Dendritic cell treated with granulocyte-macrophage colony-stimulating factor and Interleukin-4, amounts not matched to agents 40 ng/mL and 50 ng/mL, for 4 days (primary cell): ENCODE measurements at regions of chr14 and their contacts with region 1.

Region 1: GRCh38 chr14:35331605-35332516 is 39.7 kb downstream of the PSMA6 start:
- H3K4me3 Mint-ChIP-seq: peak overlapping the region; percentile 11
- H3K27ac Mint-ChIP-seq: peak overlapping the region; percentile 95
- H3K4me1 Mint-ChIP-seq: peaks cover 49% of the 10 kb centered on the region
- H3K27me3 Mint-ChIP-seq: no peaks in the 10 kb centered on the region

Region 2: DNA sequence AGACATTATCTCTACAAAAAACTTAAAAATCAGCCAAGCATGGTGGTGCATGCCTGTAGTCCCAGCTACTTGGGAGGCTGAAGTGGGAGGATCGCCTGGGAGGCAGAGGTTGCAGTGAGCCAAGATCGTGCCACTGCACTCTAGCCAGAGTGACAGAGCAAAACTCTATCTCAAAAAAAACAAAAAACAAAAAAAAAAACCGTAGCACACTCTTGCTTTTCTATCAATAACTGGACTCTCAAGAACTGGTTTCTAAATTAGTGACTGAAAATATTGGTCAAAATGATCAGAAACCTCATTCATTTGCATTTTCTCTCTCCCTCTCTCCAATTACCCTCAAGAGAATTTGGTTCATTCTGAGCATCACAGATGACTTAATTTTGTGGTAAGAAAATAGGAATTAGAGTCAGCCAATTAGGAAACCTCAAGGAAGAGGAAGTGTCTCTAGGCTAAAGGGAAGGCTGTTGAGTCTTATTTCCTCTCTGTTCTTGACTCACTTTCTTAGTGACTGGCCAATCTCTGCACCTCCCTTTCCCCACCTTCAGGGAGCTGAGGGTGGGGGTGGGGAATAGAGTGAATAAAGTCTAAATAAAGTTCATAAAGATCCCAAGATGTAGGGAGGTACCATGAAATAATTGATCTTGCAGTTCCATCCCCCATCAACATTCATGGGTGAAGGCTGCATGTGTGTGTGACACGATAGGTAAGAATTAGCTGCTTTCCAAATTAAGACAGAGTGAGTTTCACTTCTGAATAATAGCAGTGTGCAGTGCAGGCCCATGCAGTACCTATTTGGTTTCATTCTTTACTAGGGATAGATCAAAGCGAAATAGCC is 46.5 kb before region 1 on chr14:
- intact Hi-C with region 1: no loop called
- H3K4me3 Mint-ChIP-seq: peak overlapping the region; percentile 30
- H3K27ac Mint-ChIP-seq: peak overlapping the region; percentile 78
- H3K4me1 Mint-ChIP-seq: peaks cover 55% of the 10 kb centered on the region
- H3K27me3 Mint-ChIP-seq: no peaks in the 10 kb centered on the region

Region 3: DNA sequence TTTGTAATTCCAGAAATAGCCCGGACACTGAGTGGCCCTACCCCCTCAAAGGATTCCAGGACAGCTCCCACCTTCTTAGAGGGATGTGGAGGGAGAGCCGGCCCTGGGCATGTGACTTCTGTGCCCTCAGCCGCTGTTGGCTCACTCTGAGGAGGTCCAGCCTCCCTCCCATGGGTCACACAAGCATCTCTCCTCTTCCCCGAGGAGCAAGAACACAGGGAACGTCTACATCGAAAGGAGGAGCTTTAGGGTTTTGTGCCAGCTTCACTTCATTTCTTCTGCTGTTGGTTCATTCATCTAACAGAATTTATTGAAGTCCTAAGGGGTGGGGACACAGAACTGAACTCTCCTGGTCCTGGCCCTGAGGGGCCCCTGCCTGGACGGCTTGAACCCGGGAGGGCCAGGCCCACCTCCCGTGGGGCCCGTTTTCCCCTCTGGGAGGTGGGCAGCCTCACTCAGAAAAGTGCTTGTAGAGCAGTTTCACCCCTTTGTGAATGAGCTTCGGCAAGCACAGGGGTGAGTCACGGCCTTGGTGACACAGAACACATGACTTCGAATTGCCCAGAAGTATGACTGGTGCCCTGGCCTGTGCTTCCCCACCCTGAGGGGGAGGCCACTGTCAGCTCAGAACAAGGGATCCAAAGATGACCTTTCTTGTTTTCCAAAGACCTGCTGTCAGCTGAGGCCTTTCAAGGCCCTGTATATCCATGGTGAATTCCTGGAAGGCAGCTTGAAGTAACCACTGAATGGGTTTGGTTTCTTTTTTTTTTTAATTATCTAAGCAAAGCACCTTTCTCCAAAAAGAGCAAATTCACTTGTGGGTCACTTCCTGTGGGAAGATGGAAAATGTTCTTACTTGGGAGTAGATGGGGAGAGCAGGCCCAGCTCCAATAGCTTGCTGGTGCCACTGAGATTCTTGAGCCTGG is 33.5 kb after region 1 on chr14:
- intact Hi-C with region 1: loop called (anchors 5 kb)
- H3K4me3 Mint-ChIP-seq: peak overlapping the region; percentile 39
- H3K27ac Mint-ChIP-seq: peak overlapping the region; percentile 98
- H3K4me1 Mint-ChIP-seq: peaks cover 65% of the 10 kb centered on the region
- H3K27me3 Mint-ChIP-seq: no peaks in the 10 kb centered on the region

Region 4: GRCh38 chr14:35398071-35398632 is 66.3 kb after region 1 on chr14:
- intact Hi-C with region 1: loop called (anchors 2 kb)
- H3K4me3 Mint-ChIP-seq: no peak overlapping the region
- H3K27ac Mint-ChIP-seq: peak overlapping the region; percentile 100
- H3K4me1 Mint-ChIP-seq: peaks cover 61% of the 10 kb centered on the region
- H3K27me3 Mint-ChIP-seq: no peaks in the 10 kb centered on the region

Region 5: GRCh38 chr14:35414365-35414764 is 82.5 kb after region 1 on chr14:
- intact Hi-C with region 1: no loop called
- H3K4me3 Mint-ChIP-seq: no peak overlapping the region
- H3K27ac Mint-ChIP-seq: no peak overlapping the region
- H3K4me1 Mint-ChIP-seq: peaks cover 11% of the 10 kb centered on the region
- H3K27me3 Mint-ChIP-seq: no peaks in the 10 kb centered on the region